ENCODE measurements at regions of chr1 and their contacts with region 1.

Region 1: GRCh38 chr1:246128494-246129069 is 378.5 kb downstream of the SMYD3 start:
- DNase-seq: no peak
- ATAC-seq: no peak
- H3K4me3 ChIP-seq: no peak overlapping the region
- H3K27ac ChIP-seq: no peak overlapping the region
- H3K4me1 ChIP-seq: no peaks in the 10 kb centered on the region
- H3K27me3 ChIP-seq: no peaks in the 10 kb centered on the region
- CTCF ChIP-seq: no peak
- POLR2A ChIP-seq: no peak
- RAD21 ChIP-seq: no peak

Region 2: GRCh38 chr1:246081886-246082600 is 46.5 kb before region 1 on chr1:
- CTCF ChIA-PET with region 1: no interaction called
- POLR2A ChIA-PET with region 1: no interaction called
- dilution Hi-C with region 1: no loop called
- in situ Hi-C with region 1: no loop called
- intact Hi-C with region 1: no loop called
- DNase-seq: no peak
- ATAC-seq: no peak
- H3K4me3 ChIP-seq: no peak overlapping the region
- H3K27ac ChIP-seq: no peak overlapping the region
- H3K4me1 ChIP-seq: no peaks in the 10 kb centered on the region
- H3K27me3 ChIP-seq: no peaks in the 10 kb centered on the region
- CTCF ChIP-seq: no peak
- POLR2A ChIP-seq: no peak
- RAD21 ChIP-seq: no peak

Region 3: DNA sequence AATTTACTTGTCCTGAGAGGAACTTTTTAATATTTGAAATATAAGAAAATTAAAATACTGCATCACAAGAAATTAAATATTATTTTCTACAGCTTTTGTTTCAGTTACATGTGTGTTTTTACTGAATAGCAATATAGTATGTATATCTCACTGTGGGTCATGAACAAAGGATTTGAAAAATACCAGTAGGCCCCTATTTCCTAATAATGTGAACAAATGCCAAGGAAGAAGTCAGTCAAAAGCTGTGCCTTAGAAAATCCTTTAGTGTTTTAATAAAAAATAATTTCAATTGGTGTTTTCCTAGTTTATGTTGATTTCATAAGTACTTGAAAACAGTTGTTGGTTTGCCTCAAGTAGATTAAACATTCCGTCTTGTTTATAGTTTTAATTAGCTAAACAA is 331.8 kb after region 1 on chr1:
- CTCF ChIA-PET with region 1: no interaction called
- POLR2A ChIA-PET with region 1: no interaction called
- dilution Hi-C with region 1: no loop called
- in situ Hi-C with region 1: no loop called
- intact Hi-C with region 1: loop called (anchors 10 kb)
- DNase-seq: no peak
- ATAC-seq: no peak
- H3K4me3 ChIP-seq: no peak overlapping the region
- H3K27ac ChIP-seq: no peak overlapping the region
- H3K4me1 ChIP-seq: no peaks in the 10 kb centered on the region
- H3K27me3 ChIP-seq: no peaks in the 10 kb centered on the region
- CTCF ChIP-seq: no peak
- POLR2A ChIP-seq: no peak
- RAD21 ChIP-seq: no peak

Measured in IMR-90 (cell line).